ENCODE measurements at regions of chr5 and their contacts with region 1.

Region 1: DNA sequence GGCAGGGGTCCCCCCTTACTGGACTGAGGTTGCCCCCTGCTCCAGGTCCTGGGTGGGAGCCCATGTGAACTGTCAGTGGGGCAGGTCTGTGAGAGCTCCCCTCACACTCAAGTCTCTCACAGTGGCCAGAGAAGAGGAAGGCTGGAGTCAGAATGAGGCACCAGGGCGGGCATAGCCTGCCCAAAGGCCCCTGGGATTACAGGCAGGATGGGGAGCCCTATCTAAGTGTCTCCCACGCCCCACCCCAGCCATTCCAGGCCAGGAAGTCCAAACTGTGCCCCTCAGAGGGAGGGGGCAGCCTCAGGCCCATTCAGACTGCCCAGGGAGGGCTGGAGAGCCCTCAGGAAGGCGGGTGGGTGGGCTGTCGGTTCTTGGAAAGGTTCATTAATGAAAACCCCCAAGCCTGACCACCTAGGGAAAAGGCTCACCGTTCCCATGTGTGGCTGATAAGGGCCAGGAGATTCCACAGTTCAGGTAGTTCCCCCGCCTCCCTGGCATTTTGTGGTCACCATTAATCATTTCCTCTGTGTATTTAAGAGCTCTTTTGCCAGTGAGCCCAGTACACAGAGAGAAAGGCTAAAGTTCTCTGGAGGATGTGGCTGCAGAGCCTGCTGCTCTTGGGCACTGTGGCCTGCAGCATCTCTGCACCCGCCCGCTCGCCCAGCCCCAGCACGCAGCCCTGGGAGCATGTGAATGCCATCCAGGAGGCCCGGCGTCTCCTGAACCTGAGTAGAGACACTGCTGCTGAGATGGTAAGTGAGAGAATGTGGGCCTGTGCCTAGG is at the start of gene CSF2:
- DNase-seq: peak; percentile 85
- H3K4me3 Mint-ChIP-seq: peak within 1 kb of the TSS; percentile 35
- H3K27ac Mint-ChIP-seq: no peak within 1 kb of the TSS
- H3K4me1 Mint-ChIP-seq: peaks cover 25% of the 10 kb centered on the region
- H3K27me3 Mint-ChIP-seq: no peaks in the 10 kb centered on the region
- CTCF ChIP-seq: no peak
- total RNA-seq, gene CSF2: not detected in 2 replicates

Region 2: GRCh38 chr5:131857388-131857787 is 216.0 kb before region 1 on chr5:
- CTCF ChIA-PET with region 1: no interaction called
- POLR2A ChIA-PET with region 1: no interaction called
- intact Hi-C with region 1: no loop called
- DNase-seq: no peak
- H3K4me3 Mint-ChIP-seq: no peak overlapping the region
- H3K27ac Mint-ChIP-seq: no peak overlapping the region
- H3K4me1 Mint-ChIP-seq: peaks cover 9% of the 10 kb centered on the region
- H3K27me3 Mint-ChIP-seq: no peaks in the 10 kb centered on the region
- CTCF ChIP-seq: no peak

Region 3: DNA sequence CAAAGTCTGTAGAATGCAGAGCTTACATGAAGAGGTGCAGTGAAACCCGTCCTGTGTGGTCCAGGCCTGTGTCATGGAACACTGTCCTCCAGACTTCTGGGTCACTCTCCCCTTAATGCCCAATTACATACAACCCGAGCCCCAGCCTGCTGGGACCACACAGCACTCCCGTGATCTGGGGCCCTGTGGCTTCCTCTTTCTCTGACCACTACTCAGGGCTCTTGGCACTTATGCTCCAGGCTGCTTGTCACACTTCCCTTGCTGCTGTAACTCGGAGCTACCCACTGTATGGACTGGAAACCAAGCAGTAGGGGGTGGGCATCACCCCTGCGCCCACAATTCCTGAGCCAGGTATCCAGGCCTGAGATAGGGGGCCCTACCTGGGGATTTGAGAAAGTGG is 23.3 kb before region 1 on chr5:
- CTCF ChIA-PET with region 1: interaction called, 3 read pairs
- POLR2A ChIA-PET with region 1: interaction called, 3 read pairs
- intact Hi-C with region 1: loop called (anchors 1 kb)
- DNase-seq: no peak
- H3K4me3 Mint-ChIP-seq: no peak overlapping the region
- H3K27ac Mint-ChIP-seq: no peak overlapping the region
- H3K4me1 Mint-ChIP-seq: no peaks in the 10 kb centered on the region
- H3K27me3 Mint-ChIP-seq: peaks cover 28% of the 10 kb centered on the region
- CTCF ChIP-seq: no peak

Region 4: GRCh38 chr5:132094393-132095076 is 21.1 kb after region 1 on chr5:
- CTCF ChIA-PET with region 1: interaction called, 3 read pairs
- POLR2A ChIA-PET with region 1: interaction called, 3 read pairs
- intact Hi-C with region 1: loop called (anchors 2 kb)
- DNase-seq: peak; percentile 90
- H3K4me3 Mint-ChIP-seq: no peak overlapping the region
- H3K27ac Mint-ChIP-seq: peak overlapping the region; percentile 6
- H3K4me1 Mint-ChIP-seq: peaks cover 39% of the 10 kb centered on the region
- H3K27me3 Mint-ChIP-seq: no peaks in the 10 kb centered on the region
- CTCF ChIP-seq: no peak